ENCODE measurements at regions of chr5 and their contacts with region 1.

Region 1: DNA sequence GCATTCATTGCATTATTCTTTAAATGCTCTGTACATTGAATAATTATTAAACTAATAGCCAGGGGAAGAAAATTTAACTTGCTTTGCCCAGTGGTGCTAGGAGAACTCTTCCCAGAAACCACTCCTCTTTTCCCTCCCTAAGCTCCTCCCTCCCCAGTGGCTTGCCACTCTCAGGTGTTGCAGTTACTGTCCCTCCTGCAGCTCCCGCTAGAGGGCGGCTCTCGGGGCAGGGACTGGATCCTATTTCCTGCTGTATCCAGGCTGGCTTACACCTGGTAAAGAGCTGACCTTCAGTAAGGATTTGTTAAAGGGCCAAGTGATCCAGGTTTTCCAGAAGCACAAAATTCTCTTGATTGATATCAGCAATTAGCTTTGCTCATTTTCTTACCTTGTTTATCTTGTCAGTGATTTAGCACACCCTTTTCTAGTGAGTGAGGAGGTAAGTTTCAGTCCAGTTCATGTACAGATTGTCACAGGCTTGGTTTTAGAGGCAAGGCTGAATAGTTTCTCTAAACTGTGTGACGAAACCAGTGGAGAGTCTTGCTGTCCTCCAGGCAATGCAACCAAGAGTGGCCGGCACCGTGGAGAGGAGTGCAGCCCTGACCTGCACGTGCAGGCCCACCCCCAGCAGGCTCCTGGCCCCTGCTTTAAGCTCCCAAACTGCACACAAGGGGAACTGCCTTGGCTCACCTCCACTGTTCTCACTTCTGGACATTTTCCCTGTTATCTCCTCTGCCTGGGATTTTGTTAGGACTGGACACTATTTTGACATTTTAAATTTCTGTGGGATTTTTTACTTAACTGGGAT is 423.8 kb downstream of the SPOCK1 start:
- DNase-seq: peak; percentile 33
- H3K4me3 ChIP-seq: no peak overlapping the region
- H3K27ac ChIP-seq: no peak overlapping the region
- H3K4me1 ChIP-seq: peaks cover 27% of the 10 kb centered on the region
- H3K27me3 ChIP-seq: no peaks in the 10 kb centered on the region
- CTCF ChIP-seq: peak; percentile 53 to 65
- POLR2A ChIP-seq: no peak

Region 2: DNA sequence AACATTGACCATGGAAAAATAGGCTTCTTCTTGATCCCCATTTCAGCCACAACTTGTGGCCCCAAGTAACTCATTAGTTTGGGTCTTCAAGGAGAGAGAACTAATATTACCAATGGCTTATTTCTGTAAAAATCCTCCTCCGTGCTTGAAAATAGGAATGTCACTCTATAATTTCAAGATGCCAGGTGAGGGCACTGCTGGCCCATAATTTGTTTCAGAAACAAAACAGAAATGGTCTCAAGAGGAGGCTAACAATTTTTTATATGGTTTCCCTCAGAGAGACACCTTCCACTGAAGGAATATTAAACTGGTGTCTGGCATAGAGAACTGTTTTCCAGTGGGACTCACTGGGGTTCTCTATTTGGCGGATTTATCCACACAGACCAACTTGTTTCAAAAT is 273.0 kb before region 1 on chr5:
- CTCF ChIA-PET with region 1: no interaction called
- POLR2A ChIA-PET with region 1: no interaction called
- dilution Hi-C with region 1: no loop called
- intact Hi-C with region 1: loop called (anchors 10 kb)
- DNase-seq: peak; percentile 58
- H3K4me3 ChIP-seq: no peak overlapping the region
- H3K27ac ChIP-seq: no peak overlapping the region
- H3K4me1 ChIP-seq: no peaks in the 10 kb centered on the region
- H3K27me3 ChIP-seq: peaks cover 3 to 12% of the 10 kb centered on the region in 2 experiments
- CTCF ChIP-seq: no peak
- POLR2A ChIP-seq: no peak

Region 3: GRCh38 chr5:136927571-136927970 is 147.8 kb before region 1 on chr5:
- CTCF ChIA-PET with region 1: no interaction called
- POLR2A ChIA-PET with region 1: no interaction called
- dilution Hi-C with region 1: no loop called
- intact Hi-C with region 1: no loop called
- DNase-seq: no peak
- H3K4me3 ChIP-seq: no peak overlapping the region
- H3K27ac ChIP-seq: no peak overlapping the region
- H3K4me1 ChIP-seq: no peaks in the 10 kb centered on the region
- H3K27me3 ChIP-seq: peaks cover 0 to 3% of the 10 kb centered on the region in 2 experiments
- CTCF ChIP-seq: no peak
- POLR2A ChIP-seq: no peak

Region 4: GRCh38 chr5:137037848-137038247 is 37.5 kb before region 1 on chr5:
- CTCF ChIA-PET with region 1: no interaction called
- POLR2A ChIA-PET with region 1: interaction called, 11 read pairs
- dilution Hi-C with region 1: no loop called
- intact Hi-C with region 1: no loop called
- DNase-seq: no peak
- H3K4me3 ChIP-seq: no peak overlapping the region
- H3K27ac ChIP-seq: no peak overlapping the region
- H3K4me1 ChIP-seq: peaks cover 22% of the 10 kb centered on the region
- H3K27me3 ChIP-seq: no peaks in the 10 kb centered on the region
- CTCF ChIP-seq: no peak
- POLR2A ChIP-seq: no peak

Region 5: DNA sequence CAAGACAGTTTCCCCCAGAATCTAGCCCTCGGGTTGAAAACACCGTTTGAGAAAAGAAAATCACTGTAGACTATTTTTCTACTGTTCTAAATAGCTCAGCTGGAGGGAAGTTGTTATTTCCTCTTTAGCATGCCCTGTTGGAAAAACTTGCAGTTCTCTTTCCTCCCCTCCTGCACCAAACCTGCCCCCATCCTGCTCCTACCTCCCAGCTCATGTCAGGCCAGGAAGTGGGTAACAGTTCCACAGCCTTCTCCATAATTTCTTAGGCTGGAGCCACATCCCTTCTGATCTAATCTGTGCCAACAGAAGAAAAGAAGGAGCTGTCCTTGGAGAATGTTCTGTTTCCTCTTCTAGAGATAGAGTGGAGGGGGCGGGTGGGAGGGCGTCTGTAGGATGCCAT is 14.0 kb before region 1 on chr5:
- CTCF ChIA-PET with region 1: interaction called, 19 read pairs
- POLR2A ChIA-PET with region 1: no interaction called
- dilution Hi-C with region 1: no loop called
- intact Hi-C with region 1: loop called (anchors 1 kb)
- DNase-seq: peak; percentile 89
- H3K4me3 ChIP-seq: peak overlapping the region in 1 of 3 experiments; percentile 34
- H3K27ac ChIP-seq: peak overlapping the region; percentile 46
- H3K4me1 ChIP-seq: peaks cover 16% of the 10 kb centered on the region
- H3K27me3 ChIP-seq: no peaks in the 10 kb centered on the region
- CTCF ChIP-seq: no peak
- POLR2A ChIP-seq: no peak

Region 6: DNA sequence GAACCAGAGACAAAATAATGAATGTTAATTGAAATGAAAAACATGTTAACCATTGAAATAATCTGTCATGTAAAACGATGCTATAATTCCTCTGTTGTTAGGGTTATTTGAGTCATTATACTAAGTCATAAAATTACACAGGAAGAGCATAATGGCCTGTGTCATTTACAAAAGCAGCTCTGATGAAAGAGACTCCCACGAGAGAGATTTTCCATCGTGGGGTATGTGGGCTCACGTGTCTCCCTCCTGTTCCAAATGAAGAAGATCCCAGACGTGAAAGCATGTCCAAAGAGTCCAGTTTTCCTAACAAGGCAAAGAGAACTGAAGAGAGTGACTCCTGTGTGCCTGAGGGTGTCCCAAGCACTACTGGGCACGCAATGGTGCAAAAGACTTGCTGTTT is 44.0 kb after region 1 on chr5:
- CTCF ChIA-PET with region 1: interaction called, 7 read pairs
- POLR2A ChIA-PET with region 1: no interaction called
- dilution Hi-C with region 1: no loop called
- intact Hi-C with region 1: loop called (anchors 5 kb)
- DNase-seq: no peak
- H3K4me3 ChIP-seq: no peak overlapping the region
- H3K27ac ChIP-seq: no peak overlapping the region
- H3K4me1 ChIP-seq: peaks cover 17% of the 10 kb centered on the region
- H3K27me3 ChIP-seq: no peaks in the 10 kb centered on the region
- CTCF ChIP-seq: no peak
- POLR2A ChIP-seq: no peak

Region 7: GRCh38 chr5:137220523-137220927 is 145.2 kb after region 1 on chr5:
- CTCF ChIA-PET with region 1: interaction called, 11 read pairs
- POLR2A ChIA-PET with region 1: no interaction called
- dilution Hi-C with region 1: no loop called
- intact Hi-C with region 1: loop called (anchors 10 kb)
- DNase-seq: peak; percentile 80
- H3K4me3 ChIP-seq: no peak overlapping the region
- H3K27ac ChIP-seq: no peak overlapping the region
- H3K4me1 ChIP-seq: no peaks in the 10 kb centered on the region
- H3K27me3 ChIP-seq: no peaks in the 10 kb centered on the region
- CTCF ChIP-seq: peak; percentile 61 to 62
- POLR2A ChIP-seq: no peak

Measured in endothelial cell of umbilical vein (primary cell).